A549 (cell line): ENCODE measurements at regions of chr3 and their contacts with region 1.

Region 1: DNA sequence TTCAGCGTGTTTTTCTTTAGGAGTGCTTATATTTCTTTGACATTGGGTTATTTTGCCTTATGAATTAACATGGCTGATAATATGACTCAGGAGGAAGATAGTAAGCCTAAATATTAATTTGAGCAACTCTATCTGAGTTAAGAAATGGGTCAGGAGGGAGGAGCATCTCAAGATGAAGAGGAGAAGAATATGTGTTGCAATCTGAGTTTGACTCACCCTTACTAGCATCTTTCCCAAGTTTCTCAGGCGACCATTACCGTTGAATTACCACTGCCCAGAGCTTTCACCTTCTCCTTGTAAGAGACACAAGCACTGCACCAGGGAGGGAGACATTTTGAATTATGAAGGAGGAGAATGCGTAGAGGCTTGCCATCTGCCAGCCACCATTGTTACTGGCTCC is 138.3 kb upstream of the MYRIP start:
- DNase-seq: no peak
- ATAC-seq: no peak
- H3K4me3 ChIP-seq: no peak overlapping the region
- H3K27ac ChIP-seq: no peak overlapping the region
- H3K4me1 ChIP-seq: no peaks in the 10 kb centered on the region
- CTCF ChIP-seq: no peak
- EP300 ChIP-seq: no peak
- POLR2A ChIP-seq: no peak
- RAD21 ChIP-seq: no peak

Region 2: GRCh38 chr3:39639344-39640236 is 31.5 kb before region 1 on chr3:
- CTCF ChIA-PET with region 1: interaction called, 15 read pairs
- POLR2A ChIA-PET with region 1: no interaction called
- DNase-seq: peak; percentile 87 to 91
- ATAC-seq: peak; percentile 98 to 100
- H3K4me3 ChIP-seq: no peak overlapping the region
- H3K27ac ChIP-seq: peak overlapping the region; percentile 84 to 87
- H3K4me1 ChIP-seq: peaks cover 22% of the 10 kb centered on the region
- CTCF ChIP-seq: no peak
- EP300 ChIP-seq: 0 out of 5 replicates have a peak, but pooled peaks of 1 of the 2 experiments have one; percentile 18
- POLR2A ChIP-seq: no peak
- RAD21 ChIP-seq: no peak